ENCODE measurements at regions of chr21 and their contacts with region 1.

Region 1: DNA sequence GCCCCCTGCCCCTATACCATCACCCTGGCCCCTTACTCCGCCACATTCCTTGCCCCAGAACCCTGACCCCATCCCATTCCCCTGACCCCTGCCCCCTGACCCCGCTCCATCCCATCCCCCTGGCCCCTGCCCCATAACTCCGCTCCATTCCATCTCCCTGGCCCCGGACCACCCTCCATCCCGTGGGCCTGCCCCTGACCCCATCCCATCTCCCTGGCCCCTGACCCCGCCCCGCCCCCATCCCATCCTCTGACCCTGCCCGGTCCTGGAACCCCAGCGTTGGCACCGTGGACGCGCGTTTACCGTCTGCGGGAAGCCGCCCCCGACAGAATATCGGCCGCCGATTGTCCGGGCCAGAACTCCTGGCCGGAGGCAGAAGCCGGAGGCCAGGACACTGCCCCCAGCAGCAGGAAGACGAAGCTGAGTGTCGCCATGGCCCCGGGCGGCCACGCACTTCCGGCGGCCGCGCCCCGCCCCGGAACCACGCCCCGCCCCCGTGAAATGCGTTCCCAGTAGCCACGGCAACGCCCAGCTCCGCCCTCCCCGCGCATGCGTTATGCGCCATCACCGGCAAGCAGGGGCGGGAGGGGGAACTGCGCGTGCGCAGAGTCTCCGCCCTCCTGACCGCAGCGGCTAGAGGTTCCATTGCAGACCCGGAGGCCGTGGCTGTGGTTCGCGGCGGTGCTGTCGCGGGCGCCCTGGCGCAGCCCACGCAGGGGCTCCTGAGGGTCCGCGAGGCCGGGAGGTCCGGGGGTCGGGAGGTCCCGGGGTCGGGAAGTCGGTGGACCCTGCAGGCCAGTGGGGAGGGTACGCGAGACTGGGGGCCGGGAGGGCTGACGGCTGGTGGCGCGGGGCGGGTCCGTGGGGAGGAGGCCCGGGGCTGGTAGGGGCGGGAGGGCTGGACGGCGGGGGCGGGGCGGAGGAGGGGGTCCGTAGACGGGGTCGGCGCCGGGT is at the start of gene POFUT2:
- DNase-seq: peak; percentile 93 to 97 (median 95)
- H3K4me3 ChIP-seq: peak within 1 kb of the TSS; percentile 64 to 86 (median 74)
- H3K27ac ChIP-seq: peak within 1 kb of the TSS in 1 of 2 experiments; percentile 81
- H3K4me1 ChIP-seq: peaks cover 0 to 21% (median 19%) of the 10 kb centered on the region in 4 experiments
- H3K27me3 ChIP-seq: no peaks in the 10 kb centered on the region

Region 2: GRCh38 chr21:45152265-45152746 is 135.4 kb before region 1 on chr21:
- CTCF ChIA-PET with region 1: interaction called, 27 read pairs
- POLR2A ChIA-PET with region 1: no interaction called
- DNase-seq: peak; percentile 87 to 98 (median 96)
- H3K4me3 ChIP-seq: peak overlapping the region; percentile 35 to 75 (median 59)
- H3K27ac ChIP-seq: peak overlapping the region; percentile 18 to 76
- H3K4me1 ChIP-seq: peaks cover 4 to 38% (median 26%) of the 10 kb centered on the region in 4 experiments
- H3K27me3 ChIP-seq: no peaks in the 10 kb centered on the region

Region 3: DNA sequence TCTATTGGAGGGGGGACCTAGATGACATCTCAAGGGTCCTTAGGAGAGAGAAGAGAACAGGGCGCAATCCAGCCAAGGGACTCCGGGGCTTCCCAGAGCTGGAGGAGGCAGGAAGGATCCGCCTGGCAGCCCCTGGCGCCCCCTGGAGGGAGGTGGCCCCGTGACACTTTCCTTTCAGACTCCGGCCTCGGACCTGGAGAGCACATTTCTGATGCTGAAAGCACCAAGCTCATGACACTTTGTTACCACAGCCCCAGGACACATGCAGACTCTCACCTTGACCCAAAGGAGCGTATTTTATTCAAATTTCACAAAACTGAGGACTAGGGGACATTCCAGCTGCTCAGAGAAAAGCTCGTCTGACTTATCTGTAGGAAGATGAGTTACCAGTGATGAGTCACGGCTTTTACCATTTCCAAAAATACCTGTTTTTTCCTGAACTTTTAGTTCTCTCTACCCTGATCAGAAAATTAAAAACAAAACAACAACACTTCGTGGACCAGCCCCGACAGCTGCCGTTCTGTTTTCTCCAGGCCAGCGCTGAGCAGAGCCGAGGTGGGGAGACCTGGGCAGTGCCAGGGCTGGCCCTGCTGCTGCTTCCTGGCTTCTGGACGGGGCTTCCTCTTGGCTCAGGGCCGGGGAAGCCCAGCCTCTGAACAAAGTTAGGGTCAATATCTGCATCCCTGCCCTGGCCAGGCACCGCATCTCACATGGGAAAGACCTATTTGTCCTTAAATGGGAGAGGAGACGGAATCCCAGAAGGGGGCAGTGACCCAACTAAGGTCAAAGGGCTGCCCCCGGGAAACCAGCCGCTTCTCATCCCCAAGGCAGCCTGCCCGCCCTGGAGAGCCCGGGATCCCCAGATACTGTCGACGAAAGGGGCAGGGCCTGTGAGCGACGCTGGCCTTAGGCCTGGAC is 21.6 kb after region 1 on chr21:
- CTCF ChIA-PET with region 1: interaction called, 11 read pairs
- POLR2A ChIA-PET with region 1: interaction called, 3 read pairs
- DNase-seq: peak in 2 of 3 donors; percentile 51 to 59
- H3K4me3 ChIP-seq: peak overlapping the region in 1 of 7 experiments; percentile 11
- H3K27ac ChIP-seq: no peak overlapping the region
- H3K4me1 ChIP-seq: peaks cover 0 to 14% (median 8%) of the 10 kb centered on the region in 4 experiments
- H3K27me3 ChIP-seq: peaks cover 0 to 3% (median 0%) of the 10 kb centered on the region in 5 experiments

Region 4: GRCh38 chr21:45363921-45364467 is 76.3 kb after region 1 on chr21:
- CTCF ChIA-PET with region 1: no interaction called
- POLR2A ChIA-PET with region 1: no interaction called
- DNase-seq: peak; percentile 50 to 87 (median 81)
- H3K4me3 ChIP-seq: peak overlapping the region in 1 of 7 experiments; percentile 48
- H3K27ac ChIP-seq: peak overlapping the region in 1 of 2 experiments; percentile 34
- H3K4me1 ChIP-seq: peaks cover 0 to 8% (median 4%) of the 10 kb centered on the region in 4 experiments
- H3K27me3 ChIP-seq: no peaks in the 10 kb centered on the region

Region 5: DNA sequence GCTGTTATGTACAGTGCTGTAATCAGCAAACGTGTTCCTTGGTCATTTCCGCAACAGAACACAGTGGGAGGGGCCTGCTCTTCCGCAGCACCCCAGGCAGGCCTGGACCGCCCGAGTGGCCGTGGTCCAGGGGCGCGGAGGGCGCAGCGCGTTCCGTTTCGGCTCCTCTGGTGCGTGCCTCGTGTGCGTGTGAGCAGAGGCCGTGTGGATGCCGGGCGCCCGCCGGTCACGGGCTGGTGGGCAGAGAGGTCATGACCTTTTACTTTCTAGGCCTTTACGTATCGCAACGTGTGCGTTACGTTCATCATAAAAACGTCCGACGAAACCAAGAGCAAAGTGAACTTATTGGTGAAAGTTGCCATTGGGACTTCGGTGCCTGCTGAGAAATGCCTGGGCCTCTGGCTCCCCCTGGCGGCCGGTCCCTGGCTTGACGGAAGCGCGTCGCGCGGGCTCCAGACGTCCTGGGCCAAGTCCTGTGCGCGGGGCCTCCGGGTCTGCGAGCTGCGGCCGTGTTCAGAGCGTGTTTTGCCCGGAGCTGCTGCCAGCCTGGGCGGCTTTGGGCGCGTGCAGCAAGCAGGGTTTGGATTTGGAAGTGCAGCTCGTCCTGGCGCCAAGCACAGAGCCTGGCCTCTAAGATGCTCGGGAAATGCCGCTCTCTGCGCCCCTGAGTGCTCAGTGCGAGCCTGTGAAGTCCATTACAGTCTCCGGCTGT is 151.6 kb after region 1 on chr21:
- CTCF ChIA-PET with region 1: interaction called, 19 read pairs
- POLR2A ChIA-PET with region 1: no interaction called
- DNase-seq: peak; percentile 81 to 91 (median 88)
- H3K4me3 ChIP-seq: peak overlapping the region in 4 of 7 experiments; percentile 29 to 64 (median 60)
- H3K27ac ChIP-seq: peak overlapping the region in 1 of 2 experiments; percentile 43
- H3K4me1 ChIP-seq: peaks cover 0 to 21% (median 12%) of the 10 kb centered on the region in 4 experiments
- H3K27me3 ChIP-seq: peaks cover 0 to 4% (median 0%) of the 10 kb centered on the region in 5 experiments